ENCODE measurements at regions of chr1 and their contacts with region 1.

Region 1: GRCh38 chr1:174262349-174263241 is 103.3 kb downstream of the RABGAP1L start:
- DNase-seq: peak; percentile 56
- H3K27ac ChIP-seq: no peak overlapping the region
- CTCF ChIP-seq: peak; percentile 80

Region 2: GRCh38 chr1:174149216-174149615 is 113.4 kb before region 1 on chr1:
- CTCF ChIA-PET with region 1: no interaction called
- POLR2A ChIA-PET with region 1: no interaction called
- DNase-seq: no peak
- H3K27ac ChIP-seq: no peak overlapping the region
- CTCF ChIP-seq: no peak

Region 3: DNA sequence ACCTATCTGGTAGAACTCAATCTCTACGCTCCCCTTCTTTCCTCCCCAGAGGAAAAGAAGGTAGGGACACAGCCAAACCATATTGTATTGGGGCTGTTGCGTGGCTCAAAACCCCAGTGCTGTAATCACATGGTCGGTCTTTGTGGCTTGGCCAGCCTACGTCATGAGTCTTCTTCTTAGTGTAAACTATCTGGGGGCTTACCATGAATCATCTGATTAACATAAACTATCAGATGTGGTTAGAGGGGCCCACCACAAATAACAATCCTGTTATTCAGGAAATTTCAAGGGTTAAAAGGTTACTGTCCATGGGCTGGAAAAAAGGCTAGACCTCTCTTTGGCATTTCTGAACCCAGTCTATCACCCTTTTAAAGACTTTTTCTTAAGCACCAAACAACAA is 135.7 kb after region 1 on chr1:
- CTCF ChIA-PET with region 1: no interaction called
- POLR2A ChIA-PET with region 1: no interaction called
- DNase-seq: no peak
- H3K27ac ChIP-seq: no peak overlapping the region
- CTCF ChIP-seq: no peak

Region 4: GRCh38 chr1:174726167-174726879 is 463.7 kb after region 1 on chr1:
- CTCF ChIA-PET with region 1: interaction called, 18 read pairs
- POLR2A ChIA-PET with region 1: no interaction called
- DNase-seq: no peak
- H3K27ac ChIP-seq: no peak overlapping the region
- CTCF ChIP-seq: peak; percentile 58

Region 5: GRCh38 chr1:174743654-174744561 is 481.3 kb after region 1 on chr1:
- CTCF ChIA-PET with region 1: interaction called, 13 read pairs
- POLR2A ChIA-PET with region 1: no interaction called
- DNase-seq: peak; percentile 34
- H3K27ac ChIP-seq: no peak overlapping the region
- CTCF ChIP-seq: peak; percentile 78